GM12878 (cell line): ENCODE measurements at regions of chr5 and their contacts with region 1.

Region 1: DNA sequence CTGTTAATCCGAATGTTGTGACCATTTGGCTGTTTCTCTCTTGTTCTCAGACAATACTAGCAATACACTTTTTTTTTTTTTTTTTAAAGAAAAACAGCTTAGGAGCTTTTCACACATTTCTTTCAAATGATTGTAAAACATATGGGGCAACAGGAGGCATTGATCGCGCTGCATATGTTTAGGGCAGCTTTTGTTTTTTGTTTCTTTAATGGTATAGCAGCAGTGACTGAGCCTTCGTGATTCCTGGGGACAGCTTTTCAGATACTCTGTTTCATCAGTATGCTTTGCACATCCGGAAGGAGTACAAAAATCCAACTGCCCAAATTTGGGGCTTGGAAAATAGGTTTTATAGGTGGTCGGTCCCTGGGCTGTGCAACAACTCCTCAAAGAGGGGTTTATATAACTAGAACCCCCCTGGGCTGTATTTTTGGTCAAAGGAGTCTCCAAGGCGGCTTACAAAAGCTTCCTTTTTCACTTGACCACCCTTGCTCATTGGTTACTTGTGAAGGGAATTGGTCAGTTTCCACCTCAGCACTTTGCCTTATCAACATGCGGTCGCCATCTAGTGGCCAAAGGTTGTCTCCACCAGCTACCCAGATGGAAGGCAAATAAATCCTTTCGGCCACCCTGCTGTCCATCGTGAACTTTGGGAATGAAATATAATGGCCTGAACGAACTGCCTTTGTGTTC is 91.8 kb downstream of the PDE6A start:
- DNase-seq: no peak
- ATAC-seq: peak; percentile 96
- H3K4me3 ChIP-seq: no peak overlapping the region
- H3K27ac ChIP-seq: no peak overlapping the region
- H3K4me1 ChIP-seq: no peaks in the 10 kb centered on the region
- H3K27me3 ChIP-seq: no peaks in the 10 kb centered on the region
- CTCF ChIP-seq: peak; percentile 83 to 93 (median 87)
- EP300 ChIP-seq: no peak
- POLR2A ChIP-seq: no peak
- RAD21 ChIP-seq: peak; percentile 83

Region 2: GRCh38 chr5:149551200-149552037 is 301.4 kb before region 1 on chr5 and contains the start of gene CSNK1A1:
- CTCF ChIA-PET with region 1: no interaction called
- POLR2A ChIA-PET with region 1: no interaction called
- RAD21 ChIA-PET with region 1: no interaction called
- SMC1A ChIA-PET with region 1: no interaction called
- in situ Hi-C with region 1: no loop called
- intact Hi-C with region 1: no loop called
- DNase-seq: peak; percentile 98
- ATAC-seq: peak; percentile 91
- H3K4me3 ChIP-seq: peak within 1 kb of the TSS; percentile 82
- H3K27ac ChIP-seq: peak within 1 kb of the TSS; percentile 100
- H3K4me1 ChIP-seq: no peaks in the 10 kb centered on the region; the same call in 1 of the 2 replicates
- H3K27me3 ChIP-seq: no peaks in the 10 kb centered on the region
- CTCF ChIP-seq: peak; percentile 58 to 77 (median 69)
- EP300 ChIP-seq: 0 out of 4 replicates have a peak, but pooled peaks of 1 of the 2 experiments have one; percentile 23
- POLR2A ChIP-seq: peak; percentile 94
- RAD21 ChIP-seq: peak; percentile 51
- polyA plus RNA-seq, gene CSNK1A1: 53.3 to 62.0 TPM

Region 3: DNA sequence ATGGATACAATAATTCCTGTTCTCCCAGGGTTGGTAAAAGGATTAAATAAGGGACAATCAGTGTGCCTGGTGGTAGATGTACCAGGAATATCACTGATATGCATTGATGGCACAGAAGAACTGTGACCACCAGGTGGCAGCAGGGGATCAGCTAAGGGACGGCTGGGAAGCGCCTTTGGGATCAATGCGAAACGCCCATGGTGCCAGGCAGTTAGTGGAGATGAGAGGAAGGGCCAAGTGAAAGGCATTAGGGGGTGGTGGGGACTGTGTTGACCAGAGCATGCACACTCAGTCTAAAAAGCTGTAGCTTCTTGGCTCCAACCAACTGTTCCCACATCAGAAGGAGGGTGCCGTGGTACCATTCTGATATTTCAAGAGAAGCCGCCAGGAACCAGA is 215.9 kb before region 1 on chr5:
- CTCF ChIA-PET with region 1: interaction called, 193 read pairs
- POLR2A ChIA-PET with region 1: interaction called, 6 read pairs
- RAD21 ChIA-PET with region 1: interaction called, 29 read pairs
- SMC1A ChIA-PET with region 1: interaction called, 79 read pairs
- in situ Hi-C with region 1: no loop called
- intact Hi-C with region 1: loop called (anchors 1 kb)
- DNase-seq: no peak
- ATAC-seq: peak; percentile 85
- H3K4me3 ChIP-seq: no peak overlapping the region
- H3K27ac ChIP-seq: no peak overlapping the region
- H3K4me1 ChIP-seq: peaks cover 12% of the 10 kb centered on the region
- H3K27me3 ChIP-seq: no peaks in the 10 kb centered on the region
- CTCF ChIP-seq: peak; percentile 74 to 78 (median 77)
- EP300 ChIP-seq: no peak
- POLR2A ChIP-seq: no peak
- RAD21 ChIP-seq: peak; percentile 87

Region 4: DNA sequence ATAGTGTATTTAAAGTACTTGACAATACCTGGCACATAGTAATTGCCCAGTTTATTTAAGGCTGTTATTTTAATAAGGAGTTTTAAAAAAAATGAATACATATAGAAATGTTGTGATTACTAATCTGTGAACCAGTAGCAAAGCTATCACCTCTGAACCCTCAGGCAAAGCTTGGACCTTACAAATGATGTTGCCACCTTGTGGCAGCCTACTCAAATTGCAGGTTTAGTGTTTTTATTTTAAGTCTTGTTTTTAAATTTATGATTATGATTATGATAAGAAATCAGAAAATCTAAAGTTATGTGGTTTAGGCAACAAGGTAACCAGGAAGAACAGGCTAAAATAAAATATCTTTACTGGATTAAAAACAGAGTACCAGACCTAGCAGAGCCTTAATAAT is 86.9 kb before region 1 on chr5:
- CTCF ChIA-PET with region 1: no interaction called
- POLR2A ChIA-PET with region 1: no interaction called
- RAD21 ChIA-PET with region 1: no interaction called
- SMC1A ChIA-PET with region 1: no interaction called
- in situ Hi-C with region 1: no loop called
- intact Hi-C with region 1: no loop called
- DNase-seq: no peak
- ATAC-seq: no peak
- H3K4me3 ChIP-seq: no peak overlapping the region
- H3K27ac ChIP-seq: no peak overlapping the region
- H3K4me1 ChIP-seq: peaks cover 4% of the 10 kb centered on the region; the same call in 1 of the 2 replicates
- H3K27me3 ChIP-seq: no peaks in the 10 kb centered on the region
- CTCF ChIP-seq: peak; percentile 6 to 52 (median 18); a peak in 3 of 6 replicates
- EP300 ChIP-seq: no peak
- POLR2A ChIP-seq: no peak
- RAD21 ChIP-seq: no peak

Region 5: DNA sequence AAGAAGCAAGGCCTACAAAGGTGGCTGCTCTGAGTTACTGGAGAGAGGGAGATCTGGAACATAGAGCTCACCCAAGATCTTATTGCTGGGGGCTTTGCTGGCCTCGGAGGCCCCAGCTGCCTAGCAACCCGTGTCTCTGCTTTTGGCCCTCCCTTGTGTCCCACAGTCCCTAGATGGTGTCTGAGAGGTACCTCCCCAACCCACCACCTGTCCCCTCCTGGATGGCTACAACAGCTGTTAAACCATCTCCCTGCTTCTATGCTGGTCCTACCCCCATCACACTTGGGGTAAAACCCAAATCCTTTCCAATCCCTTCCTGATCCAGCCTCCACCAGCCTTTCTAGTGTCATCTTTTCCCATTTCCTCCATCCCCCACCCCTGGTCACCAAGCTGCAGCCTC is 36.1 kb before region 1 on chr5:
- CTCF ChIA-PET with region 1: interaction called, 14 read pairs
- POLR2A ChIA-PET with region 1: interaction called, 4 read pairs
- RAD21 ChIA-PET with region 1: interaction called, 4 read pairs
- SMC1A ChIA-PET with region 1: no interaction called
- in situ Hi-C with region 1: no loop called
- intact Hi-C with region 1: no loop called
- DNase-seq: no peak
- ATAC-seq: no peak
- H3K4me3 ChIP-seq: no peak overlapping the region
- H3K27ac ChIP-seq: no peak overlapping the region
- H3K4me1 ChIP-seq: peaks cover 1% of the 10 kb centered on the region; the same call in 1 of the 2 replicates
- H3K27me3 ChIP-seq: no peaks in the 10 kb centered on the region
- CTCF ChIP-seq: no peak
- EP300 ChIP-seq: no peak
- POLR2A ChIP-seq: no peak
- RAD21 ChIP-seq: no peak

Region 6: DNA sequence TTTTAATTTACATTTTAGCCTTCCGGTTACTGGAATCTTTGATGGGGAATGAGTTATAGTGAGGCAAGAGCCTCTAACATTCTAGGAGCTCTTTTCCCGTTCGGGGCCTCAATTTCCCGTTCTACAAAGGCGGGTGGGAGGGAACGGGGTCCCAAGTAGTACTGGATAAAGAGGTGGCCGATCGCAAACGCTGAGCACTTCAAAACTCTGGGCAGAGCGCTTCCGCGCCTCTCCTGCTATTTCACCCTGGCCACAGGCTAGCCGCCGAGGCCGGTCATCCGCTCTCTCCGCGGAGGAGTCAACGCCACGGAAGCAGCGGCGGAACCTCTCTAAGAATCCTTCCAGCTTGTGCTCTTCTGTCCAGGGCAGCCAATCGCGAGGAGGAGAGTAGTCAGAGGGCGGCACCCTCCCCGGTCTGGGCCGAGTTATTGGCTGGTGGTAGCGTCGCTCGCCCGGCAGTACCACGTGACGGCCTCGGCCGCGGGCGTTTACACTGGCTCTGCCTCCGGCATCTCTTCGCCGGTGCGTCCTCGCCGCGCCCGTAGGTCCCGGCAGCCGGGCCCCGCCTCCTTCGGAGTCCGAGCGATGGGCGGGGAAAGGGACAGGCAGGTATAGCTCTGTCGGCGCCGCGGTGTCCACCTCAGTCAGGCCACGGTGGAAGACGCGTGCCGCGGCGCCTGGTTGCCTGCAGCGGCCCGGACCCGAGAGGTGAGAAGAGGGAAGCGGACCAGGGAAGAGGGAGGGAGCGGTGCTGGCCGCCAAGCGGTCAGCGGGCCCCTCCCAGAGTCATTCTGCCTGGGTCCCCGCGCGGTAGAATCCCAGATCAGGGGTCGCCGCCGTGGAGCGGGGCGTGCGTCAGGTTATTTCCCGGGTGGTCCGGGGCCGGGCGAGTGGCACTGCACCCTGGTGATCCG is 107.7 kb after region 1 on chr5 and contains the start of gene SLC26A2:
- CTCF ChIA-PET with region 1: interaction called, 45 read pairs
- POLR2A ChIA-PET with region 1: no interaction called
- RAD21 ChIA-PET with region 1: interaction called, 10 read pairs
- SMC1A ChIA-PET with region 1: interaction called, 20 read pairs
- in situ Hi-C with region 1: no loop called
- intact Hi-C with region 1: no loop called
- DNase-seq: peak; percentile 93
- ATAC-seq: peak; percentile 98
- H3K4me3 ChIP-seq: peak within 1 kb of the TSS; percentile 67
- H3K27ac ChIP-seq: peak within 1 kb of the TSS; percentile 70
- H3K4me1 ChIP-seq: peaks cover 12% of the 10 kb centered on the region
- H3K27me3 ChIP-seq: no peaks in the 10 kb centered on the region; a peak in 1 of 4 replicates
- CTCF ChIP-seq: no peak
- EP300 ChIP-seq: no peak; a peak in 1 of 4 replicates
- POLR2A ChIP-seq: peak; percentile 94
- RAD21 ChIP-seq: no peak
- polyA plus RNA-seq, gene SLC26A2: 1.7 to 1.9 TPM

Region 7: DNA sequence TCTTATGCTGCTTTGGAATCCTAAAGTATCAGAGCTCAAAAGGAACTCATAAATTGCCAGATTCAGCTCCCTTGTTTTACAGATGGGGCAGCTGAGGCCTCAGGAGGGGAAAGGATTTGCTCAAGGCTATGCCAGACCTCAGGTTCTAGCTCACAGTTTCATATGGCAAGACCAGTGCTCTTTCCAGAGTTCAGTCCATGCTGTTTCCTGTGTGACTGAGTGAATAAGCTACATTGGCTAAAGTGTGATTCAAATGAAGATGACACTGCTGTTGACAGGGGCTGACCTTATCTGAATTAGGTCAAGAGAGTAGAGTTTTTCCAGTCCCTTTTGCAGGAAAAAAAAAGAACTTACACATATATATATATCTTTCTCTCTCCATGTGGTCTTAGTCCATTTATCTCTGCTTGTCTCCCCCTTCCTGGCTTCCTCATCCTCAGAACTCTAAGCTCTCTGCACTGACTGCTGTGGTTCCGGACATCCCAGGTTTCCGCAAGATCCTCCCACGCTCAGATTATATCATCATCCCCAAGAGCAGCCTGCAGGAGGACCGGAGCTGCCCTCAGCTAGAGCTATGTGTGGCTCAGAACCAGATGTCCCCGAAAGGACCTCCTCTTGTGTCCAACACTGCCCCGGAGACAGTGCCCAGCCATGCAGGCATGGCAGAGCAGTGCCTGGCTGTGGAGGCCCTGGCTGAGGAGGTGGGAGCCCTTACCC is 157.0 kb after region 1 on chr5:
- CTCF ChIA-PET with region 1: interaction called, 10 read pairs
- POLR2A ChIA-PET with region 1: no interaction called
- RAD21 ChIA-PET with region 1: no interaction called
- SMC1A ChIA-PET with region 1: no interaction called
- in situ Hi-C with region 1: no loop called
- intact Hi-C with region 1: no loop called
- DNase-seq: no peak
- ATAC-seq: no peak; the same call in 2 of the 3 replicates
- H3K4me3 ChIP-seq: no peak overlapping the region
- H3K27ac ChIP-seq: no peak overlapping the region
- H3K4me1 ChIP-seq: no peaks in the 10 kb centered on the region; the same call in 1 of the 2 replicates
- H3K27me3 ChIP-seq: no peaks in the 10 kb centered on the region
- CTCF ChIP-seq: no peak
- EP300 ChIP-seq: no peak
- POLR2A ChIP-seq: no peak
- RAD21 ChIP-seq: no peak

Region 8: GRCh38 chr5:150272526-150272925 is 419.7 kb after region 1 on chr5:
- CTCF ChIA-PET with region 1: no interaction called
- POLR2A ChIA-PET with region 1: no interaction called
- RAD21 ChIA-PET with region 1: no interaction called
- SMC1A ChIA-PET with region 1: no interaction called
- in situ Hi-C with region 1: no loop called
- intact Hi-C with region 1: no loop called
- DNase-seq: no peak
- ATAC-seq: peak; percentile 83
- H3K4me3 ChIP-seq: no peak overlapping the region
- H3K27ac ChIP-seq: no peak overlapping the region
- H3K4me1 ChIP-seq: no peaks in the 10 kb centered on the region
- H3K27me3 ChIP-seq: peaks cover 3 to 4% of the 10 kb centered on the region in 2 experiments; a peak in 3 of 4 replicates
- CTCF ChIP-seq: peak; percentile 36 to 50 (median 45); a peak in 4 of 6 replicates
- EP300 ChIP-seq: no peak
- POLR2A ChIP-seq: no peak
- RAD21 ChIP-seq: peak; percentile 69